HAP-1 (cell line): ENCODE measurements at regions of chr14 and their contacts with region 1.

Region 1: GRCh38 chr14:81990312-81990761 is 456.7 kb upstream of the SEL1L start:
- DNase-seq: peak; percentile 55 to 70
- H3K4me3 ChIP-seq: no peak overlapping the region
- H3K4me1 ChIP-seq: no peaks in the 10 kb centered on the region
- H3K27me3 ChIP-seq: no peaks in the 10 kb centered on the region

Region 2: DNA sequence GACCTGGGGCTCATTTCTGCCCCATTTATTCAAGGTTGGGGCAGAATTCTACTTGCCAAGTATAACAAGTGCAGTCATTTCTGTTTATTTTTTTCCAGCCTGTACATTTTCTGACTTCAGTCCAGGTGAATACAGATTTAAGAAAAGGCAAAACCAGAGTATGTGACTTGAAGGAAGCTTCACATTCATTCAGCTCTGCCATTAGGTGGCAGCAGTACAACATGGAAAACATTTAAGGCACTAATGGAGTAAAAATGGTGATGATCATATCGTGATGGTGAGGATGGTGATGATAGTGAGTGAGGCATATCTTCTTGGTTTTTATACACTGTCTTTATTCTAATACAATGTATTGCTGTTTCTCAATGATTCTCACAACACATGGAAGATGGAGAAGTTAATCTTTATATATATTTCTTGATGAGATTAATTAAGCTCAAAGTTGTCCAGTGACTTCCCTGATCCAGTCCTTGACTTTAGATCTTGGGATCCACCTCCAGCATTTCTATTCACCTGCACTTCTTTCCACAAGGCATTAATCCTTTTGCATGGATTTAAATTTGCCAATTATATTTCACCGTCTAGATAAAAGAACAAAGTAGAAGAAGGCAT is 280.0 kb before region 1 on chr14:
- in situ Hi-C with region 1: loop called (anchors 25 kb)
- DNase-seq: peak; percentile 58 to 64
- H3K4me3 ChIP-seq: no peak overlapping the region
- H3K4me1 ChIP-seq: no peaks in the 10 kb centered on the region
- H3K27me3 ChIP-seq: no peaks in the 10 kb centered on the region

Region 3: DNA sequence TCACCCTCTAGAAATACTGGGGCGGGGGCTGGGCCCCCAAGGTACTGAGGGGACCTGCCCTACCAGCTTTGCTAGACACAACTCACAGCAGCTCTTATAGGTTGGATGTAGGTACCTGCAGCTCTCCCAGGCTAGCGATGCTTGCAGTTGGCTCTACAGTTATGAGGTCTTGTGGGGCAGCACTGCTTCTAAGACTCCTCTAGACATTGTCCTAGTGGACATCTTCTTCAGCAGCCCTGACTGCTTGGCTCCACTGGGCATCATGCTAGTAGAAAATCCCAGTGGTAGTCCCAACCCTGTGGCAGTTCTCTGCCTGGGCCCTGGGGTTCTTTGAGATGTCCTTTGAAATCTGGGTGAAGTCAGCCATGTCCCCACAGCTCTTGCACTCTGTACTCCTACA is 37.4 kb before region 1 on chr14:
- in situ Hi-C with region 1: no loop called
- DNase-seq: no peak
- H3K4me3 ChIP-seq: no peak overlapping the region
- H3K4me1 ChIP-seq: no peaks in the 10 kb centered on the region
- H3K27me3 ChIP-seq: no peaks in the 10 kb centered on the region